Posterior cingulate gyrus (tissue), 11 donors: ENCODE measurements at regions of chr1 and their contacts with region 1.

Region 1: GRCh38 chr1:235018161-235018560 is 110.5 kb downstream of the TOMM20 start:
- DNase-seq: no peak

Region 2: GRCh38 chr1:235074523-235075187 is 56.5 kb after region 1 on chr1:
- intact Hi-C with region 1: loop called (anchors 5 kb)
- DNase-seq: peak; percentile 31 to 92 (median 52)

Region 3: GRCh38 chr1:235571482-235571881 is 553.3 kb after region 1 on chr1:
- intact Hi-C with region 1: no loop called
- DNase-seq: no peak